Activated CD8-positive, alpha-beta T cell treated with anti-CD3 and anti-CD28 coated beads for 36 hours (primary cell): ENCODE measurements at regions of chr5 and their contacts with region 1.

Region 1: GRCh38 chr5:112174959-112175594 is 244.0 kb downstream of the EPB41L4A start:
- DNase-seq: peak; percentile 63
- ATAC-seq: peak; percentile 78
- H3K4me3 Mint-ChIP-seq: no peak overlapping the region
- H3K27ac Mint-ChIP-seq: no peak overlapping the region
- H3K4me1 Mint-ChIP-seq: no peaks in the 10 kb centered on the region
- H3K27me3 Mint-ChIP-seq: peaks cover 9% of the 10 kb centered on the region
- CTCF ChIP-seq: peak; percentile 89

Region 2: GRCh38 chr5:112160652-112161391 is 14.3 kb before region 1 on chr5:
- CTCF ChIA-PET with region 1: interaction called, 32 read pairs
- POLR2A ChIA-PET with region 1: interaction called, 5 read pairs
- intact Hi-C with region 1: no loop called
- DNase-seq: peak; percentile 93
- ATAC-seq: peak; percentile 99
- H3K4me3 Mint-ChIP-seq: peak overlapping the region; percentile 86
- H3K27ac Mint-ChIP-seq: peak overlapping the region; percentile 88
- H3K4me1 Mint-ChIP-seq: peaks cover 27% of the 10 kb centered on the region
- H3K27me3 Mint-ChIP-seq: no peaks in the 10 kb centered on the region
- CTCF ChIP-seq: peak; percentile 88

Region 3: DNA sequence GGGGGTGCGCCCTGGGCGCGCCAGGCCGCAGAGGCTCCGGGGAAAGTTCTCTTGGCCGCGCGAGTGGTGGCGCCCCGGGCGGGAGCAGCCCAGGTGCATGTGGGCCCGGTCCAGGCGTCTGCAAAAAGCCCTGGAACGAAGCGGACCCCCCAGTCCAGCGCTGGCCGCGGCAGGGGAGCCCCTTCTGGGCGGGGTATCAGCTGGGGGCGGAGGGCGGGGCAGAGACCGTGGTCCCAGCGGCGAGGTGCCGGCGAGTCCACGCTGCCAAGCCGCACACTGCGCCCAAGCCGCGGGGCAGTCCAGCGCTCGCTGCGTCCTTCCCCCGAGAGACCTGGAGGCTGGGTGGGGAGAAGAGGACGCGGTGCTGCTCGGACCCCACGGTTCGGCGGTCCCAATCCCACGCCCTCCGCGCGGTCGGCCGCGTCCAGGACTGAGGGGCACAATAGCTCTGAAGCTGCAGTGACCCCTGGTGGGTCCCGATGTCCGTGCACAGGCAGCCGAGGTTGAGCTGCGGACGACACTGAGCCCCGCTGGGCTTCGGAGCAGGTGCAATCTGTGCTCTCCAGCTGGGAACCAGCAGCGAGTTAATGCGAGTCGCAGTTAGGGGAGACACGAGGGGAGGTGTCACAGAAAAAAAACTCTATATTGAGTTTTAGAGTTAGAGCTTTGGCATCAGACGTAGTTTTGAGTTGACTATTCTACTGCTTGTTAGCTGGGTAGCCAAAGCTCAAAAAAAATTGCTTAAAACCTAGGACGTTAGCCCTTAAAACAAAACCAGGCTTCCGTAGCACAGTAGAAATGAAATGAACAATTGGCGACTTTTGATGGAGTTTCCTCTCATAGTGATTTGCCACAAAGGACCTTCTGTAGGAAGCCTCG is 245.1 kb after region 1 on chr5:
- CTCF ChIA-PET with region 1: interaction called, 29 read pairs
- POLR2A ChIA-PET with region 1: no interaction called
- intact Hi-C with region 1: loop called (anchors 5 kb)
- DNase-seq: peak; percentile 68
- ATAC-seq: peak; percentile 74
- H3K4me3 Mint-ChIP-seq: peak overlapping the region; percentile 32
- H3K27ac Mint-ChIP-seq: no peak overlapping the region
- H3K4me1 Mint-ChIP-seq: peaks cover 10% of the 10 kb centered on the region
- H3K27me3 Mint-ChIP-seq: peaks cover 46% of the 10 kb centered on the region
- CTCF ChIP-seq: peak; percentile 70

Region 4: DNA sequence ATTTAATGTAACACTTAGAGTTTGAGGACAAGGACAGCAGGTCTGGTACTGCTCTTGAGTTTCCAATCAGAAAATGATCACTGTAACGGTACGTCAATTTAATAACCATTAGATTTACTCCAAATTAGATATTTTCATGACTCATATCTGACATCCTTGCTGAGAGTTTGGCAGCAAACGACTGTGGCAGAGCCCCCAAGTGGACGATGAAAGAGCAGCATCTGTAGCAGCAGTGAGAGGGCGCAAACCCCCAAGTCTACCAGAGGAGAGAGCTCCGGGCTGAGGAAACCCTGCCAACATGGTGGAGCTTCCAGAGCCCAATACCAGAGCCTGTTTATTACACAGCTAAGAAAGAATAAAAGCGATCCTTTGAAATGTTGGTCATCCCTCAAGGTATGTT is 317.2 kb after region 1 on chr5:
- CTCF ChIA-PET with region 1: interaction called, 12 read pairs
- POLR2A ChIA-PET with region 1: no interaction called
- intact Hi-C with region 1: no loop called
- DNase-seq: peak; percentile 62
- ATAC-seq: peak; percentile 78
- H3K4me3 Mint-ChIP-seq: no peak overlapping the region
- H3K27ac Mint-ChIP-seq: no peak overlapping the region
- H3K4me1 Mint-ChIP-seq: no peaks in the 10 kb centered on the region
- H3K27me3 Mint-ChIP-seq: peaks cover 29% of the 10 kb centered on the region
- CTCF ChIP-seq: peak; percentile 41